Psoas muscle (tissue), 8 donors: ENCODE measurements at regions of chr14 and their contacts with region 1.

Region 1: DNA sequence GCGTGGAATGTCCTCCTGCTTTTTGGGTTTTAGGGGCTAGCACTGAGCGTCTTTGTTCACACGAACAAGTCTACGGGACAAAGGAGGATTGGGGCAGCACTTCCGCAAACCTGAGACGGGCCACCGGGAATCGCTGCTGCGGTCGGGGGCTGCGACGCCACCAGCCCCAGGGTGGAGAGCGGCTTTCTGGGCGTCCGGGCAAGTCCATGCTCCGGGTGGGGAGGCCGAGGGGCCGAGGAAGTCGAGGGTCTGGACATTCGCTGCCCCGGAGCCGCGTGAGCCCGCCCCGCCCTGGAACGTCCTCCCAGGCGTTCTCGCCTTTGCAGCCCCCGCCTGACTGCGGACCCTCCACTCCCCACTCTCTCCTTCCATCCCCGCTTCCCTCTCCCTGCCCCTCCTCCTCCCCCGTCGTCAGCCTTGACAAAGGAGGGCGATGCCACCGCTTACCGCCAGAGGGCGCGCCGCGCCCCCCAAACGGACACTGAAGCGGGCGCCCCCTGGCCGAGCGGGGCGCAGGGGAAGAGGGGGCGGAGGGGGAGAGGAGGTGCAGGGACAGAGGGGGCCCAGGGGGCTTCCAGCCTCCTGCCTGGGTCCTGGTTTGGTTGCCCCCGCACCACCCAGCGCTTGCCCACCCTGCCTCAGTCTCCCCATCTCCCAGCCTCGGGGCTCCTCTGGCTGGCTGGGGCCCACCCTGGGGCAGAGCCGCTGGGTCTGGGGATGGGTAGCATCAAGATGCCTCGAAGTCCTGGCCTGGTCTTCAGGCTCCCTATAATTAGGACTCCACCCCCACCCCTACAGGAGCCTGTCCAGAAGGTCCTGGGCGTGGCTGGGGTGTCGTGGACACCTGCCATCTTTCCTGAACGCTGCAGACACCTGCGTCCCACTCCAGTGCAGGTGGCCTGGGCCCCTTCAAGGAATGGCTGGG is 39.1 kb upstream of the INF2 start:
- DNase-seq: peak; percentile 68 to 79
- ATAC-seq: peak; percentile 81 to 95 (median 85)
- H3K4me3 ChIP-seq: peak overlapping the region; percentile 55
- H3K27ac ChIP-seq: no peak overlapping the region
- H3K4me1 ChIP-seq: no peaks in the 10 kb centered on the region
- H3K27me3 ChIP-seq: peaks cover 0 to 4% (median 3%) of the 10 kb centered on the region in 3 donors
- CTCF ChIP-seq: peak; percentile 88

Region 2: DNA sequence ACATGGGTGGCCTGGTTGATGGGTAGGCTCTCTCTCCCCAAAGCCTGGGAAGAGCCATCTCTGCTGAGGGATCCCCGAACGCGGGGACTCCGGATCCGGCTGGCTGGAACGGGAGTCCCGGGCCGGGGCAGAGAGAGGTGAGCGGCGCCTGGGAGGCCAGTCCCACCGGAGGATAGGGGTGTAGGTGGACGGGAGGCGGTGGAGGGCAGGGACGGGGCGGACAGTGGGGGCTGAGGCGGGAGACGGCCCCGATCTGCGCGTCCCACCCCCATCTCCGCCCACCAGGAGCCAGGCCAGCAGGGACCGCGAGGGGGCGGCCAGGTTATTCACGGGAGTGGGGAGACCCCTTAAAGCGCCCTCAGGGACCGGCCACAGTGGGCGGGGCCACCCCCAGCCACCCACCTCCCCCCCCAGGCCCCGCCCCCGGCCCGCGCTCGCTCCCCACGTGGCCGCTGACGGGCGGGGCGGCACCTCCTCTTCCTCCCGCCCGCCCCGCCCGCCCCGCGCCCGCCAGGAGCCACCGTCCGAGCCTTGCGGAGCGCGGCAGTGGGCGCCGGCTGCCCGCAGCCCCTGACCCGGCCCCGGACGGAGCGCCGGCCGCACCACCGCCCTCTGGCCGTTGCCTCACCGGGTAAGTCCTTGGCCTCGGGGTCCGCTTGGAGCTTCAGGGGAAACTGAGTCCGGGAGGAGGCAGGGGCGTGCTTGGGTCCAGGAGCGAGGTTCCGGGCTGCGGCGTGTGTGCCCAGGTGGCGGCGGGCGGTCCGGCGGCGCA is 39.0 kb after region 1 on chr14 and contains the start of gene INF2:
- intact Hi-C with region 1: loop called in 1 of 2 experiments (anchors 5 kb)
- DNase-seq: peak; percentile 70 to 76
- ATAC-seq: peak; percentile 63 to 76 (median 68)
- H3K4me3 ChIP-seq: peak within 1 kb of the TSS; percentile 91
- H3K27ac ChIP-seq: peak within 1 kb of the TSS; percentile 94
- H3K4me1 ChIP-seq: peaks cover 40% of the 10 kb centered on the region
- H3K27me3 ChIP-seq: no peaks in the 10 kb centered on the region
- CTCF ChIP-seq: no peak
- total RNA-seq, gene INF2: 16.4 to 26.3 (median 23.4) TPM

Region 3: DNA sequence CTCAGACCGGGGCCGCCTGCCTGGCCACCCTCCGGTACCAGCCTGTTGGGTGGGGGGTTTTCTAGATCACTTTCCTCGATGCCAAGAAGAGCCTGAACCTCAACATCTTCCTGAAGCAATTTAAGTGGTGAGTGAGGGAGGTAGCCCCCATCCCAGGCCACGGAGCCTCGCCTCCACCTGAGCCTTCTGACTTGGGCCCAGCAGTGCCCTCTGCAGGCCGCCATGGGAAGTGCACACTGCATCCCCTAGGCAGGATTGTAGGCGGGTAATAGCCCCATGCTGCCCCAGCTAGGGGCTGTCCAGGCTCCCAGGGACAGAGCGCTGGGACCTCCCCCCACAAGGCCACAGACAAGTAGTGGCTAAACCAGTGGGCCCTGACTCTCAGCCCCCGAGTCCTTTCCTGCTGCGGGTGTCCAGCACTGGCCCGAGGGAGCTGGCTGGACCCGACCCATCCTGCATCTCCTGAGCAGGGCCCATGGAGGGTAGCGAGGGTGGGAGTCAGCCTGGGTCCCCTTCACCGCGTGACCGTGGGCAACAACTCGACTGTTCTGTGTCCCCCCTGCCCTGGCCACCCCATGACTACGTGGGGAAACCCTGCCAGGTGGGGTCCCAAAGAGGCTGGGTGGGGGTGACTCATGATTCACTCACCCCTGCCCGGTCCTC is 58.4 kb after region 1 on chr14:
- intact Hi-C with region 1: loop called (anchors 1 to 2 kb)
- DNase-seq: peak; percentile 72 to 85
- ATAC-seq: peak; percentile 80 to 88 (median 84)
- H3K4me3 ChIP-seq: no peak overlapping the region
- H3K27ac ChIP-seq: no peak overlapping the region
- H3K4me1 ChIP-seq: no peaks in the 10 kb centered on the region
- H3K27me3 ChIP-seq: no peaks in the 10 kb centered on the region
- CTCF ChIP-seq: peak; percentile 99